ENCODE measurements at regions of chr3 and their contacts with region 1.

Region 1: DNA sequence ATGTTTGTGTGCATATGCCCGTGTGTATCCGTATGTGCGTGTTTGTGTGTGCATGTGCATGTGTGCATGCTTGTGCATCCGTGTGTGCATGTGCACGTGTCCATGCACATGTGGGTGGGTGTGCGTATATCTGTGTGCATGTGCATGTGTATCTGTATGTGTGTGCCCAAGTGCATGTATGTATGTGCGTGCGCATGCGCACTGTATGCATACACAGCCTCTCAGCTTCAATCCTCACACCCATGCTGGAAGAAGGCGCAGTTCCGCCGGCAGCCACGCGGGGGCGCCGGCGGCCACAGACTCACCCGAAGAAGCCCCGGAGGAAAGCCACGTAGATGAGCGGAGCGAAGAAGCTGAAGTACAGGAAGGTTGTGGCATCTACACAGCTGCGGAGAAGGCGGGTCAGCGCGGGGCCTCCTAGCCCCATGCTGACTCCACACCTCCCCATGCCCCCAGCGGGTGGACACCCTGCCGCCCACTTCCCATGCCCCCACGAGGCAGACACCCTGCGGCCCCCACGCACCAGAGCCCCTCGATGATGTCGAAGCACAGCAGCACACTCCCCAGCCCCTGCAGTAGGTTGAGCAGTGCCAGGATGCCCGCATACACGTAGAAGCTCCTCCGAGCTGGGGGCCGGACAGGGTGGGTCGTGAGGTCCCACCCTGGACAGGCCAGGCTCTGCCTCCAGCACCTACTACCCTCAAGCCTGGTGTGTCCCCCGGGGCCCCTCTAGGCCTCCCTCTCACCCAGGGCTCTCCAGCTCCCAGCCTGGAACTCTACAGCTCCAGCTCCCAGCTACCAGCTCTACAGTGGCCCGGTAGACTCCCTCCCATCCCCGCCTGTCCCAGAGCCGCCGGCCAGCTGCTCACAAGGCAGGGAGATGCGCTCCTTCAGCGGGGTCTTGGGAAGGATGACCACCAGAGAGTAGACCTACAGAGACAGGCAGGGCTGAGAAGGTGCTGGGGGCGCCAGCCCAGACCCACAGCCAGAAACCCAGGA is 15.4 kb downstream of the TPRA1 start:
- DNase-seq: peak; percentile 80 to 96 (median 88)
- H3K4me3 ChIP-seq: no peak overlapping the region
- H3K27ac ChIP-seq: no peak overlapping the region
- H3K4me1 ChIP-seq: no peaks in the 10 kb centered on the region
- H3K27me3 ChIP-seq: no peaks in the 10 kb centered on the region
- CTCF ChIP-seq: peak; percentile 90 to 99 (median 96)
- POLR2A ChIP-seq: no peak

Region 2: GRCh38 chr3:127857333-127857732 is 282.2 kb after region 1 on chr3:
- intact Hi-C with region 1: no loop called
- DNase-seq: no peak
- H3K4me3 ChIP-seq: no peak overlapping the region
- H3K27ac ChIP-seq: no peak overlapping the region
- H3K4me1 ChIP-seq: no peaks in the 10 kb centered on the region
- H3K27me3 ChIP-seq: no peaks in the 10 kb centered on the region
- CTCF ChIP-seq: no peak
- POLR2A ChIP-seq: no peak

Region 3: GRCh38 chr3:127970966-127971592 is 395.9 kb after region 1 on chr3:
- intact Hi-C with region 1: loop called in 1 of 2 experiments (anchors 10 kb)
- DNase-seq: peak; percentile 40 to 73 (median 53)
- H3K4me3 ChIP-seq: no peak overlapping the region
- H3K27ac ChIP-seq: no peak overlapping the region
- H3K4me1 ChIP-seq: no peaks in the 10 kb centered on the region
- H3K27me3 ChIP-seq: no peaks in the 10 kb centered on the region
- CTCF ChIP-seq: peak; percentile 71 to 84 (median 78)
- POLR2A ChIP-seq: no peak

Measured in adrenal gland (tissue), 19 donors.